CD8-positive, alpha-beta T cell (primary cell): ENCODE measurements at regions of chr15 and their contacts with region 1.

Region 1: DNA sequence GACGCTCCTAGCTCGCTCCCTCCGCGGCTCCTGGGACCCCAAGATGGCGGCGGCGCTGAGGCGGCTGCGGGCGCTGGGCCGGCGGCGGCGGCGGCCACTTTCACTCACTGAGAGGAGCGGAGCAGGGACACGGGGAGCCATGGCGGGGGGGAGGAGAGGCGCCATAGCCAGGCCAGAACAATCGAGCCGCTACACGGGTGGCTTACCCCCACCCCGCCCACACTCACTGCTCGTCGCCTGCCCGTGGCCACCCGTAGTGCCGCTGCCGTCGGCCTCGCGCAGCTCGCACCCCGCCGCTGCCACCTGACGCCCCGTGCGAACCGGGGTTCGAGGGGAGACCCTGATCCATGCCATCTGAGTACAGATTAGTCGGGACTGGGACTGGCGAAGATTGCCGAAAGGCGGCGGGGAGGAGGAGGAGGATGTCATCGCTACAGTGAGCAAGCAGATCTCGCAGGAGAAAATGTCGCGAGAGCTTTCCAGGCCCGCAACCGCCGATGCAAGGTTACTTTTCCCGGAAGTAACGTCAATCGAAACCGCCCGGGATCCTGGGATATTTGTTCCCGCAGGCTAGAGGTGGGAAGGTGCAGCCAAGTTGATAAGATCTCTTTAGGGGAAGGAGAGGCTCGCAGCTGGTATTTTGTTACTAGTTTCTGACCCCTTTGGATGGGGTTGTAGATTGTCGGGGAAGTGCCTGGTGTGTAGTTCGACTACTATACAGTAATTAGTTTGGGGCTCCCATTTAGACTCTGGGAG is at the start of gene INO80:
- DNase-seq: peak; percentile 90 to 98 (median 96)
- ATAC-seq: peak; percentile 74
- H3K4me3 ChIP-seq: peak within 1 kb of the TSS; percentile 68 to 98
- H3K4me3 Mint-ChIP-seq: peak within 1 kb of the TSS; percentile 96
- H3K27ac ChIP-seq: peak within 1 kb of the TSS; percentile 83 to 96
- H3K27ac Mint-ChIP-seq: peak within 1 kb of the TSS; percentile 99
- H3K4me1 ChIP-seq: peaks cover 15% of the 10 kb centered on the region
- H3K4me1 Mint-ChIP-seq: peaks cover 28% of the 10 kb centered on the region
- H3K27me3 ChIP-seq: no peaks in the 10 kb centered on the region
- H3K27me3 Mint-ChIP-seq: no peaks in the 10 kb centered on the region
- CTCF ChIP-seq: no peak
- total RNA-seq, gene INO80: 19.7 to 24.2 TPM

Region 2: DNA sequence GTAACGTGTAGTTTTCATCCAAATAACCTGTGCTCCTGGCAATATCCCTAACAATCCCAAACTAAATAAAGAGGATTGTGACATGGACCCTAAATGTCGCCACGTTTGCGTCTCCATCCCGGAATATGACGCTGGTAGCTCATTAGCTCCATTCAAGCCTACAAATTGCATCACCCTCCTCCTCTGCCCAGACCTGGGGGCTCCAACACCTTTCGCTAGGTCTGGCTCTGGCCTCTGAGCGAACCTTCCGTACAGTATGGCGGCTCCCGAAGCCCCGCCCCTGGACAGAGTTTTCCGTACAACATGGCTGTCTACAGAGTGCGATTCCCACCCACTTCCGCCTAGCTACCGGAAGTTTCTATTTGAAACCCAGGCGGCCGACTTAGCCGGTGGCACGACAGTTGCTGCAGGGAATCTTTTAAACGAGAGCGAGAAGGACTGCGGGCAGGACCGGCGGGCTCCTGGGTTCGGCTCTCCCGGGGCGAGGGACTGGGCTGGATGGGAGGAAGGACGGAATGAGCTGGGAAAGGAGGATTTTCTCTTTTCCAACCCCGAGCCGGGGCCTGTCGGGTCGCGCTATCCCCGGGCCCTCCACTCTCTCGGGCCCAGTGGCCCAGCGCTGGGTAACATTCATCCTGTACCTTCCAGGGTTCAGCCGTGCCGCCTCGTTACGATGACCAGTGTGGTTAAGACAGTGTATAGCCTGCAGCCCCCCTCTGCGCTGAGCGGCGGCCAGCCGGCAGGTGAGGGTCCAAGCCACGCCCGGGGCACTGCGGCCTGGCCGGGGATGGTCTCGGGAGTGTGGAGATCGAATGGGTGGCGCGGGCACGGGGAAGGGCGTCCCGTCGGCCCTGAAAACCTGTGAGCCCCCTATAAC is 733.5 kb before region 1 on chr15 and contains the start of gene KNSTRN:
- CTCF ChIA-PET with region 1: no interaction called
- POLR2A ChIA-PET with region 1: no interaction called
- intact Hi-C with region 1: loop called (anchors 5 kb)
- DNase-seq: peak; percentile 84 to 95 (median 93)
- ATAC-seq: peak; percentile 99
- H3K4me3 ChIP-seq: peak within 1 kb of the TSS; percentile 73 to 93
- H3K4me3 Mint-ChIP-seq: peak within 1 kb of the TSS; percentile 99
- H3K27ac ChIP-seq: peak within 1 kb of the TSS in 1 of 2 experiments; percentile 54
- H3K27ac Mint-ChIP-seq: peak within 1 kb of the TSS; percentile 81
- H3K4me1 ChIP-seq: peaks cover 13% of the 10 kb centered on the region
- H3K4me1 Mint-ChIP-seq: peaks cover 16% of the 10 kb centered on the region
- H3K27me3 ChIP-seq: no peaks in the 10 kb centered on the region
- H3K27me3 Mint-ChIP-seq: no peaks in the 10 kb centered on the region
- CTCF ChIP-seq: no peak
- total RNA-seq, gene KNSTRN: 3.8 to 5.4 TPM

Region 3: DNA sequence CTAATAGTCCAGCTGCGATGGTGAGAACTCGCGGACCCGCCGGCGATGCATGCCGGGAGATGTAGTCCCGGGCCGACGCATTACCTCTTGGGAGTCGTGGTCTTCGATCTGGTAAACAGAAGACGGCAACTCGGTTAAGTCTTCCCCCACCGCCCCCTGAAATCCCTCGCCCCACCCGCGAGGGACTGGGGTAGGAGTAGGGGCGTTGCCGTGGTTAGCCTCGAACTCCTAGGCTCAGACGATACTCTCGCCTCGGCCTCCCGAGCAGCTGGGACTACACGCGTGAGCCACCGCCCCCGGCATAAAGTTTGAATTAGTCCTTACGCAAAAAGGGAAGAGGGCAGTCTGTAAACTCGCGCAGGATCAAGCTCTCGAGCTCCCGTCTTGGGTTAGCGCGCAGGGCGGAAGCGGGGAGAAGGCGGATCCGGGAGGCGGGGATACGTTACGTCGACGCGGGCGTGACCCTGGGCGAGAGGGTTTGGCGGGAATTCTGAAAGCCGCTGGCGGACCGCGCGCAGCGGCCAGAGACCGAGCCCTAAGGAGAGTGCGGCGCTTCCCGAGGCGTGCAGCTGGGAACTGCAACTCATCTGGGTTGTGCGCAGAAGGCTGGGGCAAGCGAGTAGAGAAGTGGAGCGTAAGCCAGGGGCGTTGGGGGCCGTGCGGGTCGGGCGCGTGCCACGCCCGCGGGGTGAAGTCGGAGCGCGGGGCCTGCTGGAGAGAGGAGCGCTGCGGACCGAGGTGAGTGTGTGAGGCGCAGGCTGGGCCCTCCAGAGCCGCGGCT is 421.4 kb before region 1 on chr15 and contains the start of gene RAD51:
- CTCF ChIA-PET with region 1: no interaction called
- POLR2A ChIA-PET with region 1: interaction called, 3 read pairs
- intact Hi-C with region 1: loop called (anchors 2 kb)
- DNase-seq: peak; percentile 82 to 96 (median 94)
- ATAC-seq: peak; percentile 94
- H3K4me3 ChIP-seq: peak within 1 kb of the TSS; percentile 84 to 94
- H3K4me3 Mint-ChIP-seq: peak within 1 kb of the TSS; percentile 99
- H3K27ac ChIP-seq: peak within 1 kb of the TSS; percentile 83 to 98
- H3K27ac Mint-ChIP-seq: peak within 1 kb of the TSS; percentile 99
- H3K4me1 ChIP-seq: peaks cover 12% of the 10 kb centered on the region
- H3K4me1 Mint-ChIP-seq: peaks cover 27% of the 10 kb centered on the region
- H3K27me3 ChIP-seq: no peaks in the 10 kb centered on the region
- H3K27me3 Mint-ChIP-seq: no peaks in the 10 kb centered on the region
- CTCF ChIP-seq: no peak
- total RNA-seq, gene RAD51: 1.3 to 1.5 TPM

Region 4: GRCh38 chr15:40941528-40942336 is 174.6 kb before region 1 on chr15:
- CTCF ChIA-PET with region 1: no interaction called
- POLR2A ChIA-PET with region 1: no interaction called
- intact Hi-C with region 1: loop called (anchors 1 to 5 kb)
- DNase-seq: peak in 8 of 9 experiments; percentile 56 to 84 (median 66)
- ATAC-seq: peak; percentile 72
- H3K4me3 ChIP-seq: peak overlapping the region; percentile 69 to 78
- H3K4me3 Mint-ChIP-seq: peak overlapping the region; percentile 86
- H3K27ac ChIP-seq: peak overlapping the region; percentile 30 to 64
- H3K27ac Mint-ChIP-seq: peak overlapping the region; percentile 30
- H3K4me1 ChIP-seq: peaks cover 29% of the 10 kb centered on the region
- H3K4me1 Mint-ChIP-seq: peaks cover 37% of the 10 kb centered on the region
- H3K27me3 ChIP-seq: no peaks in the 10 kb centered on the region
- H3K27me3 Mint-ChIP-seq: no peaks in the 10 kb centered on the region
- CTCF ChIP-seq: peak; percentile 40

Region 5: DNA sequence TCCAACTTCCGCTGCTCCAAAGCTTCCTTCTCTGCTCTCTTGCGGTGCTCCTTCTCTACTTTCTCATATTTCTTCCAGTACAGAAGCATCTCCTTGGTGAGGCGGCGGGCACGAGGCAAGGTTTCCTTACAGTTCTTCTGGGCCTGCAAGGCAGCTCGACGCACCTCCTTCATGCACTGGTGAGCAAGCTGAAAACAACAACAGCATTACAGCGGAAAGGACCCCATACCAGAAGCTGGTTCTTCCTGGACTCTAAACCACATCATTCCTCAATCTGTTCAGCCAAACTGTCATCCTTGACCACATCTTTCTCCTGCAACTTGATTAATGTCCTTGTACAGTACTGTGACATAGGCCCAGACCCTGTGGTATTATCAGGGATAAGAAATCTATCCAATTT is 36.6 kb before region 1 on chr15:
- CTCF ChIA-PET with region 1: no interaction called
- POLR2A ChIA-PET with region 1: no interaction called
- intact Hi-C with region 1: no loop called
- DNase-seq: no peak
- ATAC-seq: no peak
- H3K4me3 ChIP-seq: no peak overlapping the region
- H3K4me3 Mint-ChIP-seq: no peak overlapping the region
- H3K27ac ChIP-seq: no peak overlapping the region
- H3K27ac Mint-ChIP-seq: no peak overlapping the region
- H3K4me1 ChIP-seq: no peaks in the 10 kb centered on the region
- H3K4me1 Mint-ChIP-seq: no peaks in the 10 kb centered on the region
- H3K27me3 ChIP-seq: no peaks in the 10 kb centered on the region
- H3K27me3 Mint-ChIP-seq: no peaks in the 10 kb centered on the region
- CTCF ChIP-seq: no peak

Region 6: DNA sequence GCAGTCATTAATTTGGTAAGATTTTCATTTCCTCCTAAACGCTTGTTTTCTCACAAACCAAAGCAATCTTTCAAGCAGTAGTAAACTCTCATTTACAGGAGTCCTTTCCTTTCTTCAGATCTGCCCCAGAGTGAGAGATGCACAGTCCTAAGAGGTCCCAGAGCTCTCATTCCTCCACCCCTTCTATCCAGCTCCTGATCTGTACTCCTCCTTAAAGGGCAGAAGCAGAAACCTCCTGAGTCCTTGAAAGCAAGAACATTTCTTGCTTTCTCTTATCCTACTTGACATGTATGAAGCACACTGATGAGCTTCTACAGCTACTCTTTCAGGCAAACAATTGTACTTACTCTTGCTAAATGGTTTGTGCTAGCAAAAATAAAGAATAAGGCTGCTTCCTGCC is 102.6 kb after region 1 on chr15:
- CTCF ChIA-PET with region 1: no interaction called
- POLR2A ChIA-PET with region 1: no interaction called
- intact Hi-C with region 1: no loop called
- DNase-seq: no peak
- ATAC-seq: no peak
- H3K4me3 ChIP-seq: no peak overlapping the region
- H3K4me3 Mint-ChIP-seq: no peak overlapping the region
- H3K27ac ChIP-seq: no peak overlapping the region
- H3K27ac Mint-ChIP-seq: no peak overlapping the region
- H3K4me1 ChIP-seq: no peaks in the 10 kb centered on the region
- H3K4me1 Mint-ChIP-seq: no peaks in the 10 kb centered on the region
- H3K27me3 ChIP-seq: no peaks in the 10 kb centered on the region
- H3K27me3 Mint-ChIP-seq: peaks cover 28% of the 10 kb centered on the region
- CTCF ChIP-seq: no peak

Region 7: GRCh38 chr15:41331833-41332787 is 215.8 kb after region 1 on chr15 and contains the start of gene OIP5:
- CTCF ChIA-PET with region 1: no interaction called
- POLR2A ChIA-PET with region 1: interaction called, 7 read pairs
- intact Hi-C with region 1: loop called in 1 of 2 experiments (anchors 2 kb)
- DNase-seq: peak; percentile 95 to 100 (median 96)
- ATAC-seq: peak; percentile 96
- H3K4me3 ChIP-seq: peak within 1 kb of the TSS; percentile 84 to 94
- H3K4me3 Mint-ChIP-seq: peak within 1 kb of the TSS; percentile 97
- H3K27ac ChIP-seq: peak within 1 kb of the TSS; percentile 46 to 63
- H3K27ac Mint-ChIP-seq: peak within 1 kb of the TSS; percentile 87
- H3K4me1 ChIP-seq: peaks cover 14% of the 10 kb centered on the region
- H3K4me1 Mint-ChIP-seq: peaks cover 30% of the 10 kb centered on the region
- H3K27me3 ChIP-seq: no peaks in the 10 kb centered on the region
- H3K27me3 Mint-ChIP-seq: no peaks in the 10 kb centered on the region
- CTCF ChIP-seq: peak; percentile 58
- total RNA-seq, gene OIP5: not detected

Region 8: DNA sequence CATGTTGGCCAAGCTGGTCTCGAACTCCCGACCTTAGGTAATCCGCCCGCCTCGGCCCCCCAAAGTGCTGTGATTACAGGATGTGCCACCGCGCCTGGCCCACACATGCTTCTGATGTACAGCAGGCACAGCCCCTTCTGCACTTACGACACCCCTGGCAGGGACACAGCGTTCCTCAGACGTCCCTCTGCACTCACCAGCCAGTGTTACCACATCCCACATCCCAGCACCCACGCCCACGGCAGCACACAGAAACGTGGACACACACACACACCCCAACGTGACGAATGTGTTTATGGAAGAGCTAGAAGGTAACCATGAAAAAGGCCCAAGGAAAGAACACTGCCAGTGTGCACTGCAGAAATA is 428.3 kb after region 1 on chr15:
- CTCF ChIA-PET with region 1: no interaction called
- POLR2A ChIA-PET with region 1: no interaction called
- intact Hi-C with region 1: loop called in 1 of 2 experiments (anchors 5 kb)
- DNase-seq: peak in 7 of 9 experiments; percentile 16 to 61 (median 55)
- ATAC-seq: peak; percentile 30
- H3K4me3 ChIP-seq: peak overlapping the region; percentile 88 to 95
- H3K4me3 Mint-ChIP-seq: peak overlapping the region; percentile 91
- H3K27ac ChIP-seq: peak overlapping the region in 1 of 2 experiments; percentile 64
- H3K27ac Mint-ChIP-seq: peak overlapping the region; percentile 95
- H3K4me1 ChIP-seq: peaks cover 8% of the 10 kb centered on the region
- H3K4me1 Mint-ChIP-seq: peaks cover 18% of the 10 kb centered on the region
- H3K27me3 ChIP-seq: no peaks in the 10 kb centered on the region
- H3K27me3 Mint-ChIP-seq: no peaks in the 10 kb centered on the region
- CTCF ChIP-seq: no peak